Heart left ventricle (tissue), 16 donors: ENCODE measurements at regions of chr14 and their contacts with region 1.

Region 1: GRCh38 chr14:85218982-85219381 is 311.0 kb upstream of the FLRT2 start:
- DNase-seq: no peak
- ATAC-seq: no peak
- H3K4me3 ChIP-seq: no peak overlapping the region
- H3K27ac ChIP-seq: no peak overlapping the region
- H3K4me1 ChIP-seq: no peaks in the 10 kb centered on the region
- H3K27me3 ChIP-seq: no peaks in the 10 kb centered on the region
- CTCF ChIP-seq: no peak
- POLR2A ChIP-seq: no peak

Region 2: DNA sequence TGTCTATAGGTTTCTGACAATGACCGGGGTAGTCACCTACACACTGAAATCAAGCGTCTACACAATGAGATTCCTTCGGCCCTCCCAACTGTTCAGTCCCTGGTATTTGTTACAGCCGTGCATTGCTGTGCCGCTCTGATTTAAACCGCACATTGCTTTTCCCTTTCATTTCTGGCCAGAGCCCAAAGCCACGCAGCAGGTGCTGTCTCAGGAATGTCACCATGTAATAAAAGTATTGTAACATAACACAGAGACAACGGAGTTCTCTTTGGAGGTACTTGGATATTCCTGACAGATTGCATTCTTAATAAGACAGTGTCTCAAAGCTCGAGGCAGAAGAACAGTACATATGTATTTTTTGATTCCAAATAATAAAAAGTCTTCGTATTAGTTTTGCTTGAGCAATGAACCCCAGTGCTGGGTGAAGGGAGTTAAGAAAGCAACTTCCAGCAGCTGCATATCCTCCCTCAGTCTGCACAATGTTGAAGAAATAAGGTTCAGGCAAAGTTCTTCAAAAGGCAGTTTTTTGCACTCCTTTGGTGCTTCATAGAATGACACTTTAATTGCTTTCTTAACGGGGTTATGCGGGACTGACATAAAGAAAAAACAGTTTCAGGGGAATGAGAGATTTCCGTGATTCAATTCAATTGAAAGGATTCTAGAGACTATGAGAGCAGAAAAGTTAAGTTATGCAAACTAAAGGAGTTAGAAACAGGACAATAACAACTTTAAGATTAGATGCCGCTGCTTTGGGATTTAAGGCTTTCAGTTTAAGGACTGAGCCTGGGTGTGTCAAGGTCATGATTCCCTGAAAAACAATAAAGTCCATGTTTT is 22.3 kb after region 1 on chr14:
- intact Hi-C with region 1: loop called in 1 of 10 experiments (anchors 1 kb)
- DNase-seq: no peak
- ATAC-seq: no peak
- H3K4me3 ChIP-seq: peak overlapping the region in 2 of 12 donors; percentile 15 to 27
- H3K27ac ChIP-seq: peak overlapping the region in 1 of 12 donors; percentile 37
- H3K4me1 ChIP-seq: peaks cover 0 to 12% (median 5%) of the 10 kb centered on the region in 12 donors
- H3K27me3 ChIP-seq: no peaks in the 10 kb centered on the region
- CTCF ChIP-seq: no peak
- POLR2A ChIP-seq: no peak